ENCODE measurements at regions of chr19 and their contacts with region 1.

Region 1: GRCh38 chr19:49640113-49640898 is at the start of gene RRAS:
- DNase-seq: peak; percentile 99
- H3K4me3 ChIP-seq: peak within 1 kb of the TSS; percentile 80
- H3K27ac ChIP-seq: peak within 1 kb of the TSS; percentile 100
- H3K4me1 ChIP-seq: peaks cover 37% of the 10 kb centered on the region
- H3K27me3 ChIP-seq: no peaks in the 10 kb centered on the region
- CTCF ChIP-seq: no peak
- total RNA-seq, gene RRAS: 36.6 and 40.6 TPM in 2 replicates

Region 2: GRCh38 chr19:49451430-49452181 is 188.7 kb before region 1 on chr19 and contains the start of gene PIH1D1:
- CTCF ChIA-PET with region 1: no interaction called
- POLR2A ChIA-PET with region 1: interaction called, 7 read pairs
- intact Hi-C with region 1: loop called (anchors 2 kb)
- DNase-seq: peak; percentile 96 to 100
- H3K4me3 ChIP-seq: peak within 1 kb of the TSS; percentile 87
- H3K27ac ChIP-seq: peak within 1 kb of the TSS; percentile 92
- H3K4me1 ChIP-seq: peaks cover 13% of the 10 kb centered on the region
- H3K27me3 ChIP-seq: no peaks in the 10 kb centered on the region
- CTCF ChIP-seq: no peak
- total RNA-seq, gene PIH1D1: 156 and 184 TPM in 2 replicates

Region 3: DNA sequence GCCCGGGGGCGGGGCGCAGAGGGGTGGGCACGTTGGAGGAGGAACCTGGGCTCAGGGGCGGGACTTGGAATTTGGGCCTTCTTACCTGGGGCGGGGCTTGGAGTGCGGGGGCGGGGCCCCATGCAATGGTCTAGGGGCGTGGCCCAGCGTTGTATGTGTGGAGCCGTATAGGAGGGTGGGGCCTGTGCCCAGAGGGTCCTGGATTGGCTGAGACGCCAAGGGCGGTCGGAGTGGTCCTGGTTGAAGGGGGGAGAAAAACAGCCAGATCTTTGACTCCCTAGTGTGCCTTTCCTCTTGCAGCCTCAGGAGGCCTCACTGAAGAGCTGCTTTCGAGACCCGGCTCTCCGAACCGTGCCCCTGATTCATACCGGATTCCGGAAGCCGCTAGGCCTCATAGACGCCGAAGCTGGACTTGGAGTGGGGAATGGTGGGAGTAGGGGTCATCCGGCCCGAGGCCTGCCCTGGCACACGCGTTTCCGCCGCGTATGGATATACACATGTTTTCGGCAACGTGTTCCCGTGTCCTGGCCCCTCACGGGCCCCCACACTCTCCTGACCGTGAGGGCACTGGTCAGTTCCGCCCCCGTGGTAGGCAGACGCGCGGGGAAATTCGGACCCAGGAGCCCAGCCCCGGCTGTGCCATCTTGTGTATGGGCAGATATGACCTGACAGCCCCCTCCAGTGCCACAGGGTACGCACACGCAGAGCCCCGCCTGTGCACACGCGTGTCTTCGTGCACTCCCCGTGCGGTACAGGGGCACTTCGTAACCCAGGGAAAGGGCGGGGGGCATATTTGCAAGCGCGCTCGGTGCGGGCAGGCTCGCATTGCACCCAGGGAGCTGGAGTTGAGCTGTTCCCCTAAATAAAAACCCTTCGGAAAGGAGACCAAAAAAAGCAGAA is 50.0 kb before region 1 on chr19:
- CTCF ChIA-PET with region 1: no interaction called
- POLR2A ChIA-PET with region 1: interaction called, 70 read pairs
- intact Hi-C with region 1: loop called (anchors 1 kb)
- DNase-seq: peak; percentile 96 to 99
- H3K4me3 ChIP-seq: peak overlapping the region; percentile 89
- H3K27ac ChIP-seq: peak overlapping the region; percentile 71
- H3K4me1 ChIP-seq: peaks cover 9% of the 10 kb centered on the region; the same call in 1 of the 2 replicates
- H3K27me3 ChIP-seq: no peaks in the 10 kb centered on the region
- CTCF ChIP-seq: no peak; the same call in 1 of the 2 replicates

Region 4: GRCh38 chr19:49676690-49677231 is 36.5 kb after region 1 on chr19:
- CTCF ChIA-PET with region 1: interaction called, 6 read pairs
- POLR2A ChIA-PET with region 1: interaction called, 38 read pairs
- intact Hi-C with region 1: loop called (anchors 1 kb)
- DNase-seq: peak; percentile 99
- H3K4me3 ChIP-seq: peak overlapping the region; percentile 99
- H3K27ac ChIP-seq: peak overlapping the region; percentile 91
- H3K4me1 ChIP-seq: peaks cover 21% of the 10 kb centered on the region
- H3K27me3 ChIP-seq: no peaks in the 10 kb centered on the region
- CTCF ChIP-seq: no peak

Region 5: GRCh38 chr19:49766007-49766937 is 126.0 kb after region 1 on chr19:
- CTCF ChIA-PET with region 1: interaction called, 3 read pairs
- POLR2A ChIA-PET with region 1: interaction called, 16 read pairs
- intact Hi-C with region 1: no loop called
- DNase-seq: peak; percentile 99
- H3K4me3 ChIP-seq: peak overlapping the region; percentile 59
- H3K27ac ChIP-seq: peak overlapping the region; percentile 88
- H3K4me1 ChIP-seq: peaks cover 17% of the 10 kb centered on the region
- H3K27me3 ChIP-seq: no peaks in the 10 kb centered on the region
- CTCF ChIP-seq: no peak

Region 6: DNA sequence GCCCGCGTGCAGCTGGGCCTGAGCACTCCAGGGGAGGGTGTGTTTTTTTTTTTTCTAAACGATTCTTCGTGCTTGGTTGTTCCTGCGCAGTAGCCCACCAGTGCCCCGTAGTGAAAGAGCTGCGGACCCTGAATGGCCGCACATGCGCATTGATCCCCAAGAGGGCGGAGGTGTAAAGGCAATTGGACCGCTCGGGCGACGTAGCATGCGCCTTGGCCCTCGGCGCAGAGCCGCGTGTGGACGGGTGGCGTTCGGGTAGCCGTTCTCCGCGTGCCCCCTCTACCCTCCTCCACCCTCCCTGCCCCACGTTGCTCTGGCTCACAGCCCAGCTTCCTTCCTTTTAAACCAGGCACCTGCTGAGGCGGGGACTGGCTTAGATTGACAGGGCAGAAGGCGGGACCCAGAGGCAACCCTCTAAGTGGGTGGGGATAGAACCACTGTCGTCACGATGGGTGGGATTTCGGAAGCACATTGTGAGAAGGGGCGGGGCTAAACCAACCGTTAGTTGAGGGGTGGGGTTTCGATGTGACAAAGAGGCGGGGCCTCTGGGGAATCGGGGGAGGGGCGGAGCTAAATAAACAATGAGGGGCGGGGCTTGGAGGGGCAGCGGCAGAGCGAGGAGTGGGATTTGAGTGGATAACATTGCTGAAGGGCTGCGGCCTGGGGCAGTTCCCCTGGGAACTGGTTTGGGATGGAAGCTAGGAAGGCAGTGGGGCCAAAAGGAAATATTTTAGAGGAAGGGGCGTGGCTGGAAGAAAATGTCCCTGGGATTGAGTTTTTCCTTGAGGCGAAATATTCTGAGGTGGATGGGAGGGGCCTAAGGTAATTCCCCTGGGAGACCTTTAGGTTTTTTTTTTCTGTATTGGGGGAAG is 289.5 kb after region 1 on chr19:
- CTCF ChIA-PET with region 1: interaction called, 7 read pairs
- POLR2A ChIA-PET with region 1: interaction called, 10 read pairs
- intact Hi-C with region 1: no loop called
- DNase-seq: peak; percentile 80 to 87
- H3K4me3 ChIP-seq: peak overlapping the region; percentile 83
- H3K27ac ChIP-seq: peak overlapping the region; percentile 79
- H3K4me1 ChIP-seq: peaks cover 18% of the 10 kb centered on the region
- H3K27me3 ChIP-seq: no peaks in the 10 kb centered on the region
- CTCF ChIP-seq: 0 out of 2 replicates have a peak, but pooled peaks have one; percentile 6

Measured in PC-9 (cell line).